H1 (cell line): ENCODE measurements at regions of chr19 and their contacts with region 1.

Region 1: DNA sequence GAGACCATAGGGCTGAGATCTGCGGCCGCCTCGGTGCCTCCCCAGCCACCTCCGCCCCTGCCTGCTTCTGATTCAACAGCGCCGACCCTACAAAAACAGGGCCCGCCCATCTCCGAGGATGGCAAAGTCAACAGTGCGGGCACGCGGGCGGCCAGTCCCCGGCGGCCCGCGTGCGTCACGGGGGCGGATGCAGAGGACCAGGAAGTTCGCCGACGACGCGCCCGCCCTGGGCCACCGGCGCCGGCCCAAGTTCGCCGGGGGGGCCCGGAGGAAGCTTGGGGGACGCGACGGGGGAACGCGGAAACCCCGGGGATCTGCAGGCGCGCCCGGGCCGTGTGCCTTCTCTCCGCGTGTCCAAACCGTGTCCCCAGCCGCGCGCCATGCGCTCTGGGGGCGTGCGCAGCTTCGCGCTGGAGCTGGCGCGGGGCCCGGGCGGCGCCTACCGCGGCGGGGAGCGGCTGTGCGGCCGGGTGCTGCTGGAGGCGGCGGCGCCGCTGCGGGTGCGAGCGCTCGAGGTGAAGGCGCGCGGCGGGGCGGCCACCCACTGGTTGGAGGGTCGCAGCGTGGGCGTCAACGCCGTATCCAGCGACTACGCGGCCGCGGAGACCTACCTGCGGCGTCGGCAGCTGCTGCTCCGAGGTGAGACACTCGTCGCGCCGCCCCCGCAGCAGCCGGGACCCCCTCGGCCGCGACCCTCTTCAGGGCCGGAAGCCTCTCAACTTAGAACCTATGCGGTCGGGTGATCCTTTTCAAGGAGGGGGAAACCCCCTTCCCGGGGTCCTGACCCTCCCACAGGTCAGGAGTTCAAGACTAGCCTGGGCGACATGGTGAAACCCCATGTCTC is 6.8 kb upstream of the ARRDC2 start:
- DNase-seq: peak in 1 of 2 experiments; percentile 77
- H3K4me3 ChIP-seq: peak overlapping the region; percentile 33 to 70 (median 40)
- H3K27ac ChIP-seq: no peak overlapping the region
- H3K4me1 ChIP-seq: peaks cover 0 to 3% (median 0%) of the 10 kb centered on the region in 4 experiments; a peak in 2 of 7 replicates
- H3K27me3 ChIP-seq: peaks cover 3 to 25% (median 20%) of the 10 kb centered on the region in 4 experiments
- CTCF ChIP-seq: no peak
- EP300 ChIP-seq: no peak
- POLR2A ChIP-seq: peak in 1 of 2 experiments; percentile 55; a peak in 2 of 3 replicates
- RAD21 ChIP-seq: no peak

Region 2: GRCh38 chr19:17865364-17866311 is 135.5 kb before region 1 on chr19:
- CTCF ChIA-PET with region 1: interaction called, 27 read pairs
- POLR2A ChIA-PET with region 1: interaction called, 15 read pairs
- DNase-seq: peak in 1 of 2 experiments; percentile 59
- H3K4me3 ChIP-seq: no peak overlapping the region
- H3K27ac ChIP-seq: no peak overlapping the region
- H3K4me1 ChIP-seq: peaks cover 0 to 18% (median 13%) of the 10 kb centered on the region in 4 experiments; a peak in 6 of 7 replicates
- H3K27me3 ChIP-seq: no peaks in the 10 kb centered on the region
- CTCF ChIP-seq: no peak
- EP300 ChIP-seq: no peak
- POLR2A ChIP-seq: peak; percentile 81 to 92
- RAD21 ChIP-seq: no peak

Region 3: GRCh38 chr19:17932485-17933338 is 68.4 kb before region 1 on chr19 and contains the start of gene CCDC124:
- CTCF ChIA-PET with region 1: interaction called, 200 read pairs
- POLR2A ChIA-PET with region 1: interaction called, 12 read pairs
- DNase-seq: peak; percentile 86 to 95
- H3K4me3 ChIP-seq: peak within 1 kb of the TSS; percentile 80 to 94 (median 91)
- H3K27ac ChIP-seq: peak within 1 kb of the TSS; percentile 96
- H3K4me1 ChIP-seq: peaks cover 0 to 4% (median 2%) of the 10 kb centered on the region in 4 experiments; a peak in 3 of 7 replicates
- H3K27me3 ChIP-seq: no peaks in the 10 kb centered on the region
- CTCF ChIP-seq: peak; percentile 93 to 97 (median 97)
- EP300 ChIP-seq: peak in 1 of 2 experiments; percentile 16; a peak in 1 of 3 replicates
- POLR2A ChIP-seq: no peak; a peak in 2 of 3 replicates
- RAD21 ChIP-seq: peak; percentile 97 to 98
- total RNA-seq, gene CCDC124: 101 and 103 TPM in 2 replicates

Region 4: DNA sequence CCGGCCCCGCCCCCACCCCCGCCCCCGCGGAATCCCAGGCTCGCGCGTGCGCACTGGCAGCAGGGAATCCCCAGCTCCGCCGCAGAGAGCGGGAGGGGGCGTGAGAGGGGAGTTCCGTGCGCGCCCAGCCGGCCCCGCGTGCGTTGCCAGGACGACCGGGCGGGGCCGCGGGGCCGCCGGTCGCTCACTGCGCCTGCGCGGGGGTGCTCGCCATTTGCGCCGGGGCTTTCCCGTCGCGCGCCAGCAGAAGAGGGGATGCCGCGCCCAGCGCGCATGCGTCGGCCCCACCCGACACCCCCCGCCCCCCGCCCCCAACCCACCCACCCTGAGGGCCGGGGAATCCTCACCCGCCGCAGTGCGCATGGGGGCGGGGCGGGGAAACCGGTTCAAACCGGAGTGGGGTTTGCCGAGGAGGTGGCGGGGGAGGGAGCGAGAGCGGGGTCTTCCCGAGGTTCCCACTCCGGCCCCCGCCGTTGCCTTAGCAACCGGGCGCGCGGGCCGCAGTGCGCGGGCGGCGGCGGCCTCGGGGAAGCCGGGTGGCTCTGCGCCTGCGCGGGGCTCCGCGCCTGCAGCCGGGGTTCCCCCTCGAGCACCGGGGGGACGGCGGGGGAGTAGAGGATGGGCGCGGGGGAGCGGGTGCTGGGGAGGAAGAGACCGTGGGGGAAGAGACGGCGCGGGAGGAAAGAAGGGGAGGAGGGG is 53.2 kb before region 1 on chr19:
- CTCF ChIA-PET with region 1: interaction called, 271 read pairs
- POLR2A ChIA-PET with region 1: interaction called, 13 read pairs
- DNase-seq: peak; percentile 87 to 95
- H3K4me3 ChIP-seq: peak overlapping the region in 2 of 4 experiments; percentile 48 to 73; a peak in 6 of 8 replicates
- H3K27ac ChIP-seq: no peak overlapping the region
- H3K4me1 ChIP-seq: peaks cover 0 to 32% (median 24%) of the 10 kb centered on the region in 4 experiments; a peak in 6 of 7 replicates
- H3K27me3 ChIP-seq: peaks cover 16 to 42% (median 35%) of the 10 kb centered on the region in 4 experiments
- CTCF ChIP-seq: no peak
- EP300 ChIP-seq: no peak
- POLR2A ChIP-seq: no peak
- RAD21 ChIP-seq: no peak

Region 5: DNA sequence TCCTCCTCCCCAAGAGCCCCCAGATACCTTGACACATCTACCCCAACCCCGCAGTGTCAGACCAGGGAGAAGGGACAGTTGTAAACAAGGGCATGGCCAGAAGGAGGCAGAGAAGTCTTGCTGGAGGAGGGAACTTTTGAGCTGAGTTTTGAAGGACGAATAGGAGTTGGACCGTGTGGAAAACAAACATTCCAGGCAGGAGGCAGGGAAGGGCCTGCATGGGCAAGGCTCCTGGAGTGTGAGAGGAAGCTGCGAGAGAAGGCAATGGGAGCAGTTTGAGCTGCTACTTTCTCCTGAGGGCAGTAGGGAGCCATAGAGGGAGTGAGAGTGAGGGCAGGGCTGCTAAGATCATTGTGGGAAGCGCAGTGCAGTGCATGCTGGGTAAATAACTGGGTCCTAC is 62.3 kb after region 1 on chr19:
- CTCF ChIA-PET with region 1: interaction called, 34 read pairs
- POLR2A ChIA-PET with region 1: interaction called, 3 read pairs
- DNase-seq: peak in 1 of 2 experiments; percentile 71
- H3K4me3 ChIP-seq: no peak overlapping the region
- H3K27ac ChIP-seq: no peak overlapping the region
- H3K4me1 ChIP-seq: no peaks in the 10 kb centered on the region
- H3K27me3 ChIP-seq: no peaks in the 10 kb centered on the region
- CTCF ChIP-seq: peak; percentile 43 to 63 (median 51)
- EP300 ChIP-seq: no peak
- POLR2A ChIP-seq: no peak
- RAD21 ChIP-seq: peak; percentile 62 to 69